ENCODE measurements at regions of chr2 and their contacts with region 1.

Region 1: GRCh38 chr2:235594041-235594440 is 100.2 kb downstream of the AGAP1 start:
- DNase-seq: no peak
- H3K4me3 ChIP-seq: no peak overlapping the region
- H3K27ac ChIP-seq: no peak overlapping the region
- H3K4me1 ChIP-seq: peaks cover 12% of the 10 kb centered on the region
- H3K27me3 ChIP-seq: no peaks in the 10 kb centered on the region
- CTCF ChIP-seq: peak; percentile 79

Region 2: GRCh38 chr2:235135990-235136561 is 458.0 kb before region 1 on chr2:
- intact Hi-C with region 1: loop called (anchors 5 kb)
- DNase-seq: peak; percentile 78
- H3K4me3 ChIP-seq: no peak overlapping the region
- H3K27ac ChIP-seq: no peak overlapping the region
- H3K4me1 ChIP-seq: no peaks in the 10 kb centered on the region
- H3K27me3 ChIP-seq: peaks cover 17% of the 10 kb centered on the region
- CTCF ChIP-seq: peak; percentile 86

Region 3: DNA sequence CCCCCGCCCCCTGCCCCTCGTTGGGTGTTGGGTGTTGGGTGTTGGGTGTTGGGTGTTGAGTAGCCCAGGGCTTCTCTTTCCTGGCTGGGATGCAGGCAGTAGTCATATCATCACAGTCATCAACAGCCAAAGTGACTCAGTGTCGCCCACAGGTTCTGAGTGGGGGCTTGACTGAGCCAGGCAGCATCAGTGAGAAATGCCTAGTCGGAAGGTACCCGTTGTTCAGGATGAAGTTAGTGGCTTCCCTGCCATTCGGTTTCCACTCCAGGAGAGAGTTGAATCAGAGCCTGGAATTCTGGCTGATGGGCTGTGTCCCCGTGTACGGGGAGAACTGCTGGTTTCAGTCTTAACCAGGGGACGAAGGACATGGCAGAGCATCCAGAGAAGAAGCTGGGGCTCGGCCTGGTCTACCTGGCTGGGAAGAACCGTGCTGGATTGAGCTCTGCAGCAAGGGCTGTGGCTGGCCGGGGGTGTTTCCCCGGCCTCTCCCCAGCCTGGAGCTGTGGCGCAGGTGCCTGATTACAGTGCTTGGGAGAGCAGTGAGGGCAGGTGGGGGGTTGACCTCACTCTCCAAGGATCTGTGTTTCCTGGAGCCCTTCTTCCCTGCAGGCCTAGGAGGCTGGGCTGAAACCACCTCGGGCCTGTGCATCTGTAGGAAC is 50.8 kb before region 1 on chr2:
- intact Hi-C with region 1: no loop called
- DNase-seq: no peak
- H3K4me3 ChIP-seq: no peak overlapping the region
- H3K27ac ChIP-seq: no peak overlapping the region
- H3K4me1 ChIP-seq: peaks cover 21% of the 10 kb centered on the region
- H3K27me3 ChIP-seq: no peaks in the 10 kb centered on the region
- CTCF ChIP-seq: no peak

Region 4: DNA sequence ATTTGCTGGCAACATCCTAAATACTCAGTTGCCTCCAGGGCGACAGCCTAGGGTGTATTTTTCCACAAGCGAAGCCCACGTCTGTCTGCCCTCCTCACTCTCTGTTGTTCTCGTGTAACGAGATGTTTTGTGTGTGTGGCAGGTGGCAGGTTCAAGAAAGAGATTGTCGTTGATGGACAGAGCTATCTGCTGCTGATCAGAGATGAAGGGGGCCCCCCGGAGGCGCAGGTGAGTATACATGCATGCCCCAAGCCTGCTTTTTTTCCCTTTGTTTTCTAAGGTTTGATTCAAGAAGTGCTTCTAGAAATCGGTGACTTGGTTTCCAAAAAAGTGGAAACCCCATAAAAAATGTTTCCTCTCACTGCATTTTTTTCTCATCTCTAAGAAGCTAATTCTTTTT is 146.8 kb after region 1 on chr2:
- intact Hi-C with region 1: loop called (anchors 5 kb)
- DNase-seq: no peak
- H3K4me3 ChIP-seq: no peak overlapping the region
- H3K27ac ChIP-seq: no peak overlapping the region
- H3K4me1 ChIP-seq: no peaks in the 10 kb centered on the region
- H3K27me3 ChIP-seq: no peaks in the 10 kb centered on the region
- CTCF ChIP-seq: peak; percentile 19